ENCODE measurements at regions of chr1 and their contacts with region 1.

Region 1: GRCh38 chr1:226121587-226122400 is 59.3 kb downstream of the H3-3A start:
- DNase-seq: peak; percentile 68
- H3K4me3 Mint-ChIP-seq: peak overlapping the region; percentile 76
- H3K27ac Mint-ChIP-seq: peak overlapping the region; percentile 50
- H3K4me1 Mint-ChIP-seq: peaks cover 22% of the 10 kb centered on the region
- H3K27me3 Mint-ChIP-seq: no peaks in the 10 kb centered on the region

Region 2: DNA sequence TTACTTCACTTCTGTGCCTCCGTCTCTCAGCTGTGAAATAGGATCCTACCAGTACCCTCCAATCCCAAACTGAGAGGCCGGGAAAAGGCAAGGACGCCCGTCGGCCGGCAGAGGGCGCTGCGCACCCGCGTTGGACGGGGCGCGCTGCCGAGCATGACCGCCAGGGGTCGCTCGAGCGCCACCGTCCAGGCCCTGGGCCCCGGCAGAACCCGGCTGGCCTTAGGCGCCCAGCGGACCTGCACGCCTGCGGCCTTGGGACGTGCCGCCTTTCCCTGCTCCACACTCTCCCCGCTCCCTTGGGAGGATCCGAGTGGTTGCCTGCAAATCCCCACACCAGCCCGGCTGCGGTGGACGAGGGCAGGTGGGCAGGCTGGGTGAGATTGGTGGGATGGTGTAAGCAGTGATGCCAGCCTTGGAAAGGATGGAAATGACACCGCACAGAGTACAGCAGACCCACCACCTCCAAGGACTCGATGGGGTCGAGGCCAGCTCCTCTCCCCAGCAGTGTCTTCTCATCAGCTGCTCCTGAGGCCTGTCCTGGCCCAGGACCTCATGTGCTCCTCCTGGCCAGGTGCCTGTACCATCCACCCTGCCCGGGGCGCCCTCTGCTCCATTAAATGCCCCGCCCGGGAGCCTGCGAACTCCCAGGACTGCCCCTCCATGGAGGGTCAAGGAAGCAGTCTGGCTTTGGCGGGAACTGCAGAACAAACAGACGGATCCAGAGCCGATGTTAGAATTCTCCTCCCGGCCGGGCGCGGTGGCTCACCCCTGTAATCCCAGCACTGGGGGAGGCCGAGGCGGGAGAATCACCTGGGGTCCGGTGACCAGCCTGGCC is 646.6 kb before region 1 on chr1:
- CTCF ChIA-PET with region 1: no interaction called
- intact Hi-C with region 1: loop called (anchors 1 kb)
- DNase-seq: peak; percentile 60
- H3K4me3 Mint-ChIP-seq: no peak overlapping the region
- H3K27ac Mint-ChIP-seq: no peak overlapping the region
- H3K4me1 Mint-ChIP-seq: peaks cover 37% of the 10 kb centered on the region
- H3K27me3 Mint-ChIP-seq: no peaks in the 10 kb centered on the region

Region 3: GRCh38 chr1:225917101-225917500 is 204.7 kb before region 1 on chr1:
- CTCF ChIA-PET with region 1: no interaction called
- intact Hi-C with region 1: no loop called
- DNase-seq: no peak
- H3K4me3 Mint-ChIP-seq: no peak overlapping the region
- H3K27ac Mint-ChIP-seq: no peak overlapping the region
- H3K4me1 Mint-ChIP-seq: peaks cover 36% of the 10 kb centered on the region
- H3K27me3 Mint-ChIP-seq: no peaks in the 10 kb centered on the region

Region 4: GRCh38 chr1:225977937-225978748 is 143.7 kb before region 1 on chr1:
- CTCF ChIA-PET with region 1: no interaction called
- intact Hi-C with region 1: loop called (anchors 5 kb)
- DNase-seq: no peak
- H3K4me3 Mint-ChIP-seq: no peak overlapping the region
- H3K27ac Mint-ChIP-seq: no peak overlapping the region
- H3K4me1 Mint-ChIP-seq: peaks cover 7% of the 10 kb centered on the region
- H3K27me3 Mint-ChIP-seq: no peaks in the 10 kb centered on the region

Region 5: GRCh38 chr1:226186124-226187018 is 64.6 kb after region 1 on chr1 and contains the start of gene ACBD3:
- CTCF ChIA-PET with region 1: interaction called, 23 read pairs
- intact Hi-C with region 1: loop called (anchors 1 kb)
- DNase-seq: peak; percentile 91
- H3K4me3 Mint-ChIP-seq: peak within 1 kb of the TSS; percentile 89
- H3K27ac Mint-ChIP-seq: peak within 1 kb of the TSS; percentile 87
- H3K4me1 Mint-ChIP-seq: peaks cover 34% of the 10 kb centered on the region
- H3K27me3 Mint-ChIP-seq: no peaks in the 10 kb centered on the region
- total RNA-seq, gene ACBD3: 15.0 to 15.7 TPM

Region 6: DNA sequence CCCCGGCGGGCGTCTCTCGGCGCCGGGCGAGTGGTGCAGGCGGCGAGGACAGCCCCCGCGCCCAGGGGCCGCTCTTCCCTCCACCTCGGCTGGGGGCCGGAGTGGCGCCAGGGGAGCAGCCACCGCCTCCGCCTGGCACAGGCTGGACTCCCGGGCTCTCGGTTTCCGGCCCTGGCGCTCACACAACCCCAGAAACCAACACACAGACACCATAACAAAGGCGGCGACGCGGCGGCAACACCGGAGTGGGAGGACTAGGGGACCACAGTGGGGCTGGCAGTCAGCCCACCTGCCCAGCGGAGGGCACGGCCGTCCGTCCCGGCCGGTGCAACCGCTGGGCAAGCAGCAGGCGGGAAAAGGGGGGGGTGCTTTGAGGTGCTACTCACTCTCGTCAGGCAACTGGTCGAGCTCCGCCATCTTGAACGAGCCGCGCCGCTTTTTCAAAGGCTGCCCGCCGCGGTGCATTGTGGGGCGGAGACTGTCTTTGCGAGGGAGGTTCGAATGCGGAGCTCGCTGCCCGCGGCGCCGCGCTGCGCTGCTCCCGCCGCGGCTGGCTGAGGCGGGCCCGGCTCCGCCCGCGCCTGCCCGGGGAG is 187.0 kb after region 1 on chr1 and contains the start of gene LIN9:
- CTCF ChIA-PET with region 1: interaction called, 10 read pairs
- intact Hi-C with region 1: loop called (anchors 1 kb)
- DNase-seq: peak; percentile 96
- H3K4me3 Mint-ChIP-seq: peak within 1 kb of the TSS; percentile 91
- H3K27ac Mint-ChIP-seq: peak within 1 kb of the TSS; percentile 82
- H3K4me1 Mint-ChIP-seq: peaks cover 16% of the 10 kb centered on the region
- H3K27me3 Mint-ChIP-seq: peaks cover 16% of the 10 kb centered on the region
- total RNA-seq, gene LIN9: 7.7 to 9.5 TPM

Region 7: GRCh38 chr1:226457307-226457712 is 335.5 kb after region 1 on chr1:
- CTCF ChIA-PET with region 1: no interaction called
- intact Hi-C with region 1: no loop called
- DNase-seq: peak; percentile 79
- H3K4me3 Mint-ChIP-seq: peak overlapping the region; percentile 43
- H3K27ac Mint-ChIP-seq: no peak overlapping the region
- H3K4me1 Mint-ChIP-seq: peaks cover 14% of the 10 kb centered on the region
- H3K27me3 Mint-ChIP-seq: no peaks in the 10 kb centered on the region

Region 8: DNA sequence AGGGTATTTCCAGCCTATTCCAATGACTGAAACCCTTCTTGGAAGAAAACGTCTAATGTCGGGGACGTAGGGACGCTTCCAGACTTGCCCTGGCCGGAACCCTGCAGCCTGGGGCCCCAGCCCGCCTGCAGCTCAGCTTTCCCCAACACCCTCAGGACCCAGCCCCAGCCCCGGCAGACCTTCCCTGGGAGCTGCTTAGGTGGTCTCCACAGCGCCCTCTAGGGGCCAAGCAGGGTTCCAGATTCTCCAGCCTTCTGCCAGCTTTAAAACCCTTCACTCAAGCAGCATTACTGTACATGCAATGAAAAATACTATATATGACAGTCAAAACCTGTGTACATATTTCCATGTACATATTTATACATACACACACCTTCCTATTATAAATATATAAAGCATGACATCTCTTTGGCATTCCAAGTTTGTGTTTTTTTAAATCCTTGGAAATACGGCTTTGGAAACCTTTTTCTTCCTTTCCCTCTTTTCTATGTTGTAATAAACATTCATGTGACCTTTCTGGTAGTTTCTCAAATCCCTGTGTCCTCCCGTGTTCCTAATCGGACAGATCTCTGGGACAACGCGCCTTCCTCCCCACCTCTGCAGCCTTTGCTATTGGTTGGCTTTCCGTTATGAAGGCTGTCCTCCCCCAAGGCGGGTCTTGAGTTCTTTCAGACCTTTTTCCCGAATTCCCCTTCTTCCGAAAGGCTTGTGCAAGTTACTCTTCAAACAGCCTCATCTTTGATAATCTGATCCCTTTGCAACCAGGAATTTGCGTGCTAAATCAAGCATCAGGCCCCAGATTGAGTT is 487.1 kb after region 1 on chr1:
- CTCF ChIA-PET with region 1: interaction called, 3 read pairs
- intact Hi-C with region 1: loop called (anchors 1 kb)
- DNase-seq: peak; percentile 79
- H3K4me3 Mint-ChIP-seq: no peak overlapping the region
- H3K27ac Mint-ChIP-seq: no peak overlapping the region
- H3K4me1 Mint-ChIP-seq: no peaks in the 10 kb centered on the region
- H3K27me3 Mint-ChIP-seq: no peaks in the 10 kb centered on the region

Measured in activated naive CD4-positive, alpha-beta T cell treated with anti-CD3 and anti-CD28 coated beads for 36 hours (primary cell).